Activated CD4-positive, alpha-beta memory T cell treated with anti-CD3 and anti-CD28 coated beads, Interleukin-2, amount 10 ng/mL, durations not matched to agents 7 days and 5 days (primary cell): ENCODE measurements at regions of chr12 and their contacts with region 1.

Region 1: DNA sequence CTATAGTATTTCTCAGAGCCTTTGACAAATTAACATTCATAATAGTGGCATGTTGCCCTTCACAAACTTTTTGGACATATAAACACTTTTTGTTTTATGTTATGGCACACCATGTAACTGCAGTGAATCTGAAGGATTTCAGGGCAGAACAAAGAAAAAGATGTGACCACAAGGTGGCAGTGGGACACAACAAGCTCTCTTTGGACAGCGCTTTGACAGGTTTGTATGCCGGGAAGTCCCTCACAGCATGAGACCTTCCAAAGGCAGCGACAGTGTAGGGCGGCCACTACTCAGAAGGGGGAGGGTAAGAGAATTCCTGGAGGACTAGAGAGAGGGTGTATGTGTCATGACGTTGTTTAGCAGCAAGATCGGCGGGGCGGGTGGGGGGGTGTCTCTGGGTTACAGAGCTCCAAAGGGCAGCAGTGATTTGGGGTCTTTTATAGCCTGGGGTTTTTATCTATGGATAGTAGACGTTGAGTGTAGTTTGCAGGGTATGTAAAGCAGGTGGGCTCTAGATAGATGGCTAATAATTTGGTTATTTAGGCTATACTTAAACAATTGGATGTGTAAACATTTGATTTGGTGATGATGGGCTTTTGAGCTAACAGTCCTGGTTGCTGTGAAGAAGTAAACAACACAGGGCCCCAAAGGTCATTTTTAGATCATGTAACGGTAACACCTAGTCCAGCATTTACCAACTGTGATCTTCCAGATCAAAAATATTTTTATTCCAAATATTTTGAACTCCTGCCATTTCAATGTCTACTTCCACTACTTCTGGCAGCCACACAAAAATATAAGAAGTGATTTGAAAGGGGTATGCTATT is 22.9 kb downstream of the ETFBKMT start:
- DNase-seq: peak; percentile 74
- H3K4me3 Mint-ChIP-seq: no peak overlapping the region
- H3K27ac Mint-ChIP-seq: no peak overlapping the region
- H3K4me1 Mint-ChIP-seq: peaks cover 14% of the 10 kb centered on the region
- H3K27me3 Mint-ChIP-seq: no peaks in the 10 kb centered on the region

Region 2: DNA sequence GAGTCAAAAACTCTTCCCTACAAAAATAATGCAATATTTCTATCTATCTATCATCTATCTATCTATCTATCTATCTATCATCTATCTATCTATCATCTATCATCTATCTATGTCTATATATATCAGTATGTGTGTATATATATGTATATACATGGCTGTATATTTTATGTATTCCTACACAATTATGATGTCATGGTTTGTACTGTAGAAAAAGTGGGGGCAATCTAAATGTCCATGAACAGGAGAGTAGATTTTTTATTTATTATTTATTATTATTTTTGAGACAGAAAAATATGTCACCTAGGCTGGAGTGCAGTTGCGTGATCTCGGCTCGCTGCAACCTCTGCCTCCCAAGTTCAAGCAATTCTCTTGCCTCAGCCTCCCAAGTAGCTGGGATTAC is 378.7 kb after region 1 on chr12:
- CTCF ChIA-PET with region 1: interaction called, 22 read pairs
- POLR2A ChIA-PET with region 1: no interaction called
- DNase-seq: no peak
- H3K4me3 Mint-ChIP-seq: no peak overlapping the region
- H3K27ac Mint-ChIP-seq: no peak overlapping the region
- H3K4me1 Mint-ChIP-seq: peaks cover 4% of the 10 kb centered on the region
- H3K27me3 Mint-ChIP-seq: no peaks in the 10 kb centered on the region

Region 3: GRCh38 chr12:32186814-32187515 is 504.6 kb after region 1 on chr12:
- CTCF ChIA-PET with region 1: no interaction called
- POLR2A ChIA-PET with region 1: no interaction called
- DNase-seq: no peak
- H3K4me3 Mint-ChIP-seq: no peak overlapping the region
- H3K27ac Mint-ChIP-seq: no peak overlapping the region
- H3K4me1 Mint-ChIP-seq: no peaks in the 10 kb centered on the region
- H3K27me3 Mint-ChIP-seq: no peaks in the 10 kb centered on the region